ENCODE measurements at regions of chr5 and their contacts with region 1.

Region 1: GRCh38 chr5:149551200-149552037 is at the start of gene CSNK1A1:
- DNase-seq: peak; percentile 95
- ATAC-seq: peak; percentile 93
- H3K4me3 ChIP-seq: peak within 1 kb of the TSS; percentile 95 to 99 (median 98)
- H3K27ac ChIP-seq: peak within 1 kb of the TSS; percentile 97
- H3K4me1 ChIP-seq: peaks cover 35% of the 10 kb centered on the region
- H3K27me3 ChIP-seq: no peaks in the 10 kb centered on the region; a peak in 1 of 5 replicates
- CTCF ChIP-seq: peak; percentile 76
- EP300 ChIP-seq: peak in 1 of 2 experiments; percentile 58; a peak in 1 of 4 replicates
- POLR2A ChIP-seq: peak; percentile 86 to 88
- RAD21 ChIP-seq: peak; percentile 65
- total RNA-seq, gene CSNK1A1: 149 and 210 TPM in 2 replicates

Region 2: DNA sequence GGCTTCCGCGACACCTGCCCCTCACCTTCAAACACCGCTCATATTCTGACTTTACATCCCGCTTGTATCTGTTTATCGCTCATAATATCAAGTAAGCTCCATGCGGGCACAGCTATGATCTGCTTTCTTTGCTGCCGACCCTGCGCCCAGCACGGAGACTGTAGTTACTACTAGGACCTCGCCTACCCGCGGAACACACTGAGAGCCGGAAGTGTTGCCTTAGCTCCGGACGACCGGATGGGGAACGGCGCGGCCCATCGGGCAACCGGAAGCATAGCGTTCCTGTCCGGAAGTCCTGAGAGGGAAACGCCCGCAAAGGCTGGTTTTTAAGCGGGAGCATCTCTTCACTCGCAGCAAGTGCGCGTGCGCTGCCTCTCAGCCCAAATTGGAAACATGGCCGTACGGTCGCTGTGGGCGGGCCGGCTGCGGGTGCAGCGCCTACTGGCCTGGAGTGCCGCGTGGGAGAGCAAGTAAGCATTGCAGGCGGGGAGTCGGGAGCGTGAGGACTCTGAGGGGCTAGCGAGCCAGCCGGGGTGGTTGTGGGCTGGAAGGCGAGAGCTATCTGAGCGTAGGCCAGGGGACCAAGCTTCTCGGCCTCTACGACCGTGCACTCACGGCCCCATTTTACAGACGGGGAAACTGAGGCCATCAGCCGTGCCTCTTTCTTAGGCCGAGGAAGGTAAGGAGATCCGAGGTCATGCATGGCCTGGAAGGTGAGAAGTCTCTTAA is 206.1 kb before region 1 on chr5 and contains the start of gene GRPEL2:
- CTCF ChIA-PET with region 1: no interaction called
- POLR2A ChIA-PET with region 1: interaction called, 10 read pairs
- in situ Hi-C with region 1: no loop called
- intact Hi-C with region 1: no loop called
- DNase-seq: peak; percentile 94
- ATAC-seq: peak; percentile 99
- H3K4me3 ChIP-seq: peak within 1 kb of the TSS; percentile 85 to 98 (median 91)
- H3K27ac ChIP-seq: peak within 1 kb of the TSS; percentile 74
- H3K4me1 ChIP-seq: peaks cover 50% of the 10 kb centered on the region
- H3K27me3 ChIP-seq: no peaks in the 10 kb centered on the region; a peak in 1 of 5 replicates
- CTCF ChIP-seq: 0 out of 2 replicates have a peak, but pooled peaks have one; percentile 22
- EP300 ChIP-seq: 0 out of 4 replicates have a peak, but pooled peaks of 1 of the 2 experiments have one; percentile 18
- POLR2A ChIP-seq: peak; percentile 78 to 90; a peak in 3 of 4 replicates
- RAD21 ChIP-seq: no peak; the same call in 1 of the 2 replicates
- total RNA-seq, gene GRPEL2: 16.6 and 28.4 TPM in 2 replicates

Region 3: GRCh38 chr5:149442563-149443182 is 108.7 kb before region 1 on chr5:
- CTCF ChIA-PET with region 1: interaction called, 4 read pairs
- POLR2A ChIA-PET with region 1: interaction called, 12 read pairs
- in situ Hi-C with region 1: no loop called
- intact Hi-C with region 1: loop called (anchors 2 kb)
- DNase-seq: peak; percentile 82
- ATAC-seq: peak; percentile 84
- H3K4me3 ChIP-seq: peak overlapping the region in 1 of 3 experiments; percentile 25; a peak in 1 of 6 replicates
- H3K27ac ChIP-seq: peak overlapping the region; percentile 76
- H3K4me1 ChIP-seq: peaks cover 76% of the 10 kb centered on the region
- H3K27me3 ChIP-seq: no peaks in the 10 kb centered on the region
- CTCF ChIP-seq: peak; percentile 94
- EP300 ChIP-seq: 0 out of 4 replicates have a peak, but pooled peaks of 1 of the 2 experiments have one; percentile 4
- POLR2A ChIP-seq: no peak
- RAD21 ChIP-seq: peak; percentile 94

Region 4: GRCh38 chr5:149452007-149452664 is 99.3 kb before region 1 on chr5:
- CTCF ChIA-PET with region 1: no interaction called
- POLR2A ChIA-PET with region 1: interaction called, 19 read pairs
- in situ Hi-C with region 1: loop called (anchors 5 kb)
- intact Hi-C with region 1: no loop called
- DNase-seq: peak; percentile 98
- ATAC-seq: peak; percentile 83
- H3K4me3 ChIP-seq: peak overlapping the region; percentile 25 to 62 (median 33); a peak in 5 of 6 replicates
- H3K27ac ChIP-seq: peak overlapping the region; percentile 93
- H3K4me1 ChIP-seq: peaks cover 85% of the 10 kb centered on the region
- H3K27me3 ChIP-seq: no peaks in the 10 kb centered on the region
- CTCF ChIP-seq: peak; percentile 54
- EP300 ChIP-seq: peak; percentile 77 to 93; a peak in 3 of 4 replicates
- POLR2A ChIP-seq: peak; percentile 56 to 57
- RAD21 ChIP-seq: no peak; the same call in 1 of the 2 replicates

Region 5: GRCh38 chr5:149497357-149497756 is 54.1 kb before region 1 on chr5:
- CTCF ChIA-PET with region 1: no interaction called
- POLR2A ChIA-PET with region 1: no interaction called
- in situ Hi-C with region 1: no loop called
- intact Hi-C with region 1: loop called (anchors 5 kb)
- DNase-seq: no peak
- ATAC-seq: no peak
- H3K4me3 ChIP-seq: no peak overlapping the region
- H3K27ac ChIP-seq: no peak overlapping the region
- H3K4me1 ChIP-seq: no peaks in the 10 kb centered on the region
- H3K27me3 ChIP-seq: no peaks in the 10 kb centered on the region
- CTCF ChIP-seq: no peak
- EP300 ChIP-seq: no peak
- POLR2A ChIP-seq: no peak
- RAD21 ChIP-seq: no peak

Region 6: DNA sequence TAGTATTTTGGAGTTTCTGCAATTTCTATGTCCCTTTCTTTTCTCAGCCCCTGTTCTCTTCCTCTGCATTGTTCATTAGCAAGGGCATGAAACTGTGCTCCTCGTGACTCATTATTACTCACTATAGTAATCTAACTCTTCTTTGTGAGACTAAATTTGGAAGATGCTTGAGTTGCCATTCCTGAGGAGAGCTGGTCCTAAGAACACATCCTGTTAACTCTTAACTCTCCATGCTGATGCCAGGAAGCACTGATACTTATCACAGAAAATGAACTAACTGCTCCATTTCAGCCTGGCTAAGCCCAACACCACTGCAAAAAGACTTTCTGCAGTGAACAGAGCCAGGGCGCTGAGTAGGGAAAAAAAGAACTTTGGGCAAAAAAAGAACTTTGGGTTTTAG is 10.4 kb after region 1 on chr5:
- CTCF ChIA-PET with region 1: no interaction called
- POLR2A ChIA-PET with region 1: interaction called, 17 read pairs
- in situ Hi-C with region 1: no loop called
- intact Hi-C with region 1: no loop called
- DNase-seq: peak; percentile 36
- ATAC-seq: no peak
- H3K4me3 ChIP-seq: no peak overlapping the region
- H3K27ac ChIP-seq: no peak overlapping the region
- H3K4me1 ChIP-seq: peaks cover 16% of the 10 kb centered on the region
- H3K27me3 ChIP-seq: no peaks in the 10 kb centered on the region
- CTCF ChIP-seq: no peak
- EP300 ChIP-seq: no peak
- POLR2A ChIP-seq: no peak
- RAD21 ChIP-seq: no peak

Region 7: GRCh38 chr5:149702934-149703646 is 151.7 kb after region 1 on chr5:
- CTCF ChIA-PET with region 1: no interaction called
- POLR2A ChIA-PET with region 1: no interaction called
- in situ Hi-C with region 1: no loop called
- intact Hi-C with region 1: no loop called
- DNase-seq: no peak
- ATAC-seq: peak; percentile 79
- H3K4me3 ChIP-seq: peak overlapping the region in 1 of 3 experiments; percentile 7; a peak in 1 of 6 replicates
- H3K27ac ChIP-seq: no peak overlapping the region
- H3K4me1 ChIP-seq: peaks cover 24% of the 10 kb centered on the region
- H3K27me3 ChIP-seq: no peaks in the 10 kb centered on the region
- CTCF ChIP-seq: no peak
- EP300 ChIP-seq: no peak
- POLR2A ChIP-seq: no peak
- RAD21 ChIP-seq: no peak

Measured in HepG2 (cell line).